Natural killer cell (primary cell): ENCODE measurements at regions of chr7 and their contacts with region 1.

Region 1: GRCh38 chr7:138913783-138914182 is 67.4 kb downstream of the KIAA1549 start:
- DNase-seq: no peak
- ATAC-seq: no peak
- H3K4me3 ChIP-seq: no peak overlapping the region
- H3K4me3 Mint-ChIP-seq: no peak overlapping the region
- H3K27ac ChIP-seq: no peak overlapping the region
- H3K27ac Mint-ChIP-seq: no peak overlapping the region
- H3K4me1 ChIP-seq: no peaks in the 10 kb centered on the region
- H3K4me1 Mint-ChIP-seq: no peaks in the 10 kb centered on the region
- H3K27me3 ChIP-seq: no peaks in the 10 kb centered on the region
- H3K27me3 Mint-ChIP-seq: peaks cover 15 to 33% of the 10 kb centered on the region in 2 donors
- CTCF ChIP-seq: no peak

Region 2: GRCh38 chr7:138684360-138684759 is 229.4 kb before region 1 on chr7:
- intact Hi-C with region 1: no loop called
- DNase-seq: no peak
- ATAC-seq: no peak
- H3K4me3 ChIP-seq: no peak overlapping the region
- H3K4me3 Mint-ChIP-seq: no peak overlapping the region
- H3K27ac ChIP-seq: no peak overlapping the region
- H3K27ac Mint-ChIP-seq: no peak overlapping the region
- H3K4me1 ChIP-seq: no peaks in the 10 kb centered on the region
- H3K4me1 Mint-ChIP-seq: no peaks in the 10 kb centered on the region
- H3K27me3 ChIP-seq: no peaks in the 10 kb centered on the region
- H3K27me3 Mint-ChIP-seq: peaks cover 6 to 10% of the 10 kb centered on the region in 2 donors
- CTCF ChIP-seq: no peak

Region 3: GRCh38 chr7:138902161-138902560 is 11.6 kb before region 1 on chr7:
- intact Hi-C with region 1: loop called (anchors 1 kb)
- DNase-seq: peak in 1 of 2 donors; percentile 31
- ATAC-seq: no peak
- H3K4me3 ChIP-seq: no peak overlapping the region
- H3K4me3 Mint-ChIP-seq: no peak overlapping the region
- H3K27ac ChIP-seq: no peak overlapping the region
- H3K27ac Mint-ChIP-seq: no peak overlapping the region
- H3K4me1 ChIP-seq: no peaks in the 10 kb centered on the region
- H3K4me1 Mint-ChIP-seq: no peaks in the 10 kb centered on the region
- H3K27me3 ChIP-seq: no peaks in the 10 kb centered on the region
- H3K27me3 Mint-ChIP-seq: peaks cover 31 to 39% of the 10 kb centered on the region in 2 donors
- CTCF ChIP-seq: no peak

Region 4: DNA sequence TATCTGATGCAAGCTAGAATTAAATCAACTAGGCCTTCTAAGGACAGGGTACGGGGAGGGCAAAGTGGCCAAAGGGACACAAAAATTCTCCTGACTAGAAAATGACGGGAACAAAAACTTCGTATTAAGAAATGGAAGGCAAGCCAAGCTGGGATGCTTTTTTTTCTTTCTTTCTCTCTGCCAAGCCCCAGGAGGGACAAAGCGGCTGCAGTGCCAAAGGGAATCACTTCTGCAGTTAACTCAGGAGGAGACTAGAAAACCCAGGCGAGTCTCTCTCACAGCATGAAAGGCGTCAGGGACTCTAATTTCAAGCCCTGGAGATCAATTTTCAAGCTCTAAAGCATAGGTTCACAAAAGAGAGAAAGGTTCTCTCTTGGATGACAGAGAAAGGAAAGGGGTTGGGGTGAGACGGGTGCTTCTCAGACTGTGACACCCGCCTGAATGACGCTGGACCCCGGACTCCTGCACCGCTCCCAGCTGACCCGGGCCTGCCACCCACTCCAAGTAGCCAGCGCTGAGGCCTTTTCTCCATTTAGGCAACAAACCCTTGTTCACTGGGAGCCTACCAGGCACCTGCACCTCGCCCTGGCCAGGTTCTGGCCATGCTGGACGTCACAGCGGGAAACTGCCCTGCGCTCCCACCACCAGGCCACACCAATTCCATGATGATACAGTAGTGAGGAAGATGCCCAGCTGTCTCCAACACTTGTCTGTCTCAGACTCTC is 10.9 kb after region 1 on chr7:
- intact Hi-C with region 1: no loop called
- DNase-seq: no peak
- ATAC-seq: no peak
- H3K4me3 ChIP-seq: no peak overlapping the region
- H3K4me3 Mint-ChIP-seq: no peak overlapping the region
- H3K27ac ChIP-seq: no peak overlapping the region
- H3K27ac Mint-ChIP-seq: no peak overlapping the region
- H3K4me1 ChIP-seq: no peaks in the 10 kb centered on the region
- H3K4me1 Mint-ChIP-seq: no peaks in the 10 kb centered on the region
- H3K27me3 ChIP-seq: no peaks in the 10 kb centered on the region
- H3K27me3 Mint-ChIP-seq: peaks cover 0 to 4% of the 10 kb centered on the region in 2 donors
- CTCF ChIP-seq: no peak

Region 5: GRCh38 chr7:138961159-138961558 is 47.4 kb after region 1 on chr7:
- intact Hi-C with region 1: no loop called
- DNase-seq: no peak
- ATAC-seq: no peak
- H3K4me3 ChIP-seq: no peak overlapping the region
- H3K4me3 Mint-ChIP-seq: no peak overlapping the region
- H3K27ac ChIP-seq: no peak overlapping the region
- H3K27ac Mint-ChIP-seq: no peak overlapping the region
- H3K4me1 ChIP-seq: no peaks in the 10 kb centered on the region
- H3K4me1 Mint-ChIP-seq: no peaks in the 10 kb centered on the region
- H3K27me3 ChIP-seq: no peaks in the 10 kb centered on the region
- H3K27me3 Mint-ChIP-seq: peaks cover 9 to 14% of the 10 kb centered on the region in 2 donors
- CTCF ChIP-seq: no peak